ENCODE measurements at regions of chr22 and their contacts with region 1.

Region 1: GRCh38 chr22:46233231-46233630 is 16.9 kb downstream of the CDPF1 start:
- DNase-seq: peak; percentile 67
- H3K4me3 ChIP-seq: no peak overlapping the region
- H3K27ac ChIP-seq: no peak overlapping the region
- H3K4me1 ChIP-seq: no peaks in the 10 kb centered on the region
- H3K27me3 ChIP-seq: no peaks in the 10 kb centered on the region
- CTCF ChIP-seq: no peak

Region 2: DNA sequence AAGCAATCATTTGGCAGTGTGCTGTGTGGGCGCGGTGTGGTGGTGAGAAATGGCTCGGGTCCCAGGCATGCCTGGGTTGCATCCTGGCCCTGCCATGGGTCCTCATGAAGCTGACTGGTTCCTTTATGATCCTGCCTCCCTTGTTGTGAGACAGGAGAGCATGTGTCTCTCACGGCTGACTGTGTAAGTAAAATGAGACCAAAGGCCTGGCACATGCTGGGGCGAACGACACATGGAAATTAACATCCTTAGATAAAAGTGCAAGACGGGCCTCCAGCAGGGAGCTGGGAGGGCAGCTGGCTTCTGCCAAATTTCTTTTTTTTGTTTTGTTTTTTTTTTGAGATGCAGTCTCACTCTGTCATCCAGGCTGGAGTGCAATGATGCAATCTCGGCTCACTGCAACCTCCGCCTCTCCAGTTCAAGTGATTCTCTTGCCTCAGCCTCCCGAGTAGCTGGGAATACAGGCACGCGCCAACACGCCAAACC is 739.9 kb before region 1 on chr22:
- CTCF ChIA-PET with region 1: no interaction called
- POLR2A ChIA-PET with region 1: no interaction called
- intact Hi-C with region 1: no loop called
- DNase-seq: peak; percentile 53
- H3K4me3 ChIP-seq: no peak overlapping the region
- H3K27ac ChIP-seq: no peak overlapping the region
- H3K4me1 ChIP-seq: no peaks in the 10 kb centered on the region
- H3K27me3 ChIP-seq: no peaks in the 10 kb centered on the region
- CTCF ChIP-seq: no peak

Region 3: DNA sequence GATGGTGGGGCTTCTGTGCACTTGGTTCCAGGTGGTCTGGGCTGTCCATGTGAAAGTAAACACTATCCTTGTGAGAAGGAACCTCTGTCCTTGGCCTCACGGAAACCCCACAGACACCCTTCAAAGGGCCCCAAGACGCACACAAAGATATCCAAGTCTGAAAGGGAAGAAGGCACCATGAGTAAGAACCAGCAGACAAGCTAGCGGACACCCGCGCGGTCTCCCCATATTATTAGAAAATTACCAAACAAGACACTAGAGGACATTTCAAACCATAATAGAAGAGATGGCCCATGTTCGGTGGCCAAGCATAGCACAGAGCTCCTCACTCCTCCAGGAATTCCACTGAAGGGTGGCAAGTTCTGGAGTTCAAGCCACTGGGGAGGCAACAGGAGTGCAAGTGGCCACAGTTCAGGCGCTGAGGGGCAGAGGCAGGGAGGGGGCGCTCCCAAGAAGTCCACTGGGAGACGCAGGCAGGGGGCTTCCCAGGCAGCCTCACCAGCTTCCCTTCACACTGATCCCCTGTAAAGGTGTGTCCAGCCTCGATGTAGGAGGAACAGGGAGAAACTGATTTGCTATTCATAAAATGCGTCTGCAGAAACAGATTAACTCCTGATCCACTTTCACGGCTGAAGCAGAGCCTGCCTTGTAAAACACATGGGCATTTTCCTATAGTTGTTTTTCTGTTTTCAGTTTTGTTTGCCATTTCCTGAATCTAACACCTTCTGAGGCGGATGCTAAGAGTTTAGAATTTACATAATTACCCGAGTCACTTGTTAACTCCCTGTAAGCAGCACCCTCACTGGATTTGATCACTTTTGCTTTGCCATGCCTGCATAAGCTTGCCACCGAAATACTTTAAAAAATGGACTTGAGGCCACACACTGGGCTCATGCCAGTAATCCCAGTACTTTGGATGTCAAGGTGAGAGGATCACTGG is 92.0 kb before region 1 on chr22:
- CTCF ChIA-PET with region 1: no interaction called
- POLR2A ChIA-PET with region 1: interaction called, 16 read pairs
- intact Hi-C with region 1: no loop called
- DNase-seq: no peak
- H3K4me3 ChIP-seq: no peak overlapping the region
- H3K27ac ChIP-seq: no peak overlapping the region
- H3K4me1 ChIP-seq: no peaks in the 10 kb centered on the region
- H3K27me3 ChIP-seq: no peaks in the 10 kb centered on the region
- CTCF ChIP-seq: no peak